Ascending aorta (tissue), 2 donors: ENCODE measurements at regions of chr7 and their contacts with region 1.

Region 1: DNA sequence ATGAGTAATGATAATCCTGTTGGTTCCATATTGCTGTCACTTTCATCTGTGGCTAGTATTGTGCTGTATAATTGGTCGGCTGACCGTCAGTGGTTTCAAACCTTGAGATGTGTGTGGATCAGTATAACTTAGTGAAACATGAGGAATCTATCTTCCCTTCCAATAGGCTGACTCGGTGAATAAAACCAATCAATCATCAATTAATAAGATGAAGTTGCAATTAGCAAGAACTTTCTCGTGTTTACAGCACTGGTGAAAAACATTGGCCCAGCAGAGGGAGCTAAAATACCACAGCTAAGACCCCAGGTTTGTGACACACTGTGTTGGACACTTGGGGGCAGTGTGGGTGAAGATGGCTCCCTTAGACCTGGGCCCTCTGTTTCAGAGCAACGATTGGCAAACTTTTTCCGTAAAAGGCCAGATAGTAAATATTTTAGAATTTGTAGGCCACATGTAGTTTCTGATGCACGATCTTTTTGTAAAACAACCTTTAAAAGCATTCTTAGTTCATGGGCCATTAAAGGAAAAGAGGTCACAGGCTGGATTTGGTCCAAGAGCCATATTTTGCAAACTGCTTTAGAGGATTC is 47.8 kb downstream of the STRA8 start:
- DNase-seq: peak in 1 of 2 donors; percentile 87
- H3K4me3 ChIP-seq: no peak overlapping the region
- H3K27ac ChIP-seq: no peak overlapping the region
- H3K4me1 ChIP-seq: no peaks in the 10 kb centered on the region
- H3K27me3 ChIP-seq: no peaks in the 10 kb centered on the region
- CTCF ChIP-seq: peak; percentile 88 to 95 (median 91)

Region 2: GRCh38 chr7:135558337-135558767 is 276.9 kb after region 1 on chr7:
- intact Hi-C with region 1: loop called (anchors 2 kb)
- DNase-seq: peak in 1 of 2 donors; percentile 76
- H3K4me3 ChIP-seq: peak overlapping the region; percentile 65 to 91
- H3K27ac ChIP-seq: peak overlapping the region; percentile 90 to 91
- H3K4me1 ChIP-seq: peaks cover 0 to 7% of the 10 kb centered on the region in 2 donors
- H3K27me3 ChIP-seq: no peaks in the 10 kb centered on the region
- CTCF ChIP-seq: peak; percentile 36 to 57 (median 45)

Region 3: DNA sequence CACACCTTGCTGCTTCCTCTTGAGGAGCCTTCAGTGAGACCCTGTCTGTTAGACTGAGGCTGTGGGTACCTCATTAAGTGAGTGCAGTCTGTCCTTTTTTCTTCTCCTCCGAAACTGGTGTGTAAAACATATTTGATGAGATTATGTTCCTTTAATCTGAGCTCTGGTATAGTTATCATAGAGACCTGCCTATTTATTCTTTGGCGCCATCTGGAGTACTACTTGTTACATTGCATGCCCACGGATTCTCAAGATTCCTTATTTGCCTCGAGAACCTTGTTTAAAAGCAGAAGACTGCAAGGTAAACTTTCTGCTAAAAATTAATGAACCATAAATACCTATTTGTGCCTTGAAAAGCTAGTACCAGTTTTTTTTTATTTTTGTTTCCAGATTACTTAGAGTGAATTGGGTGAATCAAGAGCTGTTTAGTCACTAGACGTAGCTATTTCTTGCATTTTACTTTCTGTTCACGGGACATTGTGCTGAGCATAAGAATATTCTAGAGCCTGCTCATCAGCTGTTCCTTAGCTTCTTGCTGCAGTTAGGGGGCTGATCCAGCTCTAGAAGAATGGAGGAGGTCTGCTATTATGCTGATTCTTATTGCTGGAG is 363.9 kb after region 1 on chr7:
- intact Hi-C with region 1: loop called (anchors 2 kb)
- DNase-seq: no peak
- H3K4me3 ChIP-seq: peak overlapping the region in 1 of 2 donors; percentile 20
- H3K27ac ChIP-seq: no peak overlapping the region
- H3K4me1 ChIP-seq: no peaks in the 10 kb centered on the region
- H3K27me3 ChIP-seq: no peaks in the 10 kb centered on the region
- CTCF ChIP-seq: peak; percentile 23 to 81 (median 79)

Region 4: DNA sequence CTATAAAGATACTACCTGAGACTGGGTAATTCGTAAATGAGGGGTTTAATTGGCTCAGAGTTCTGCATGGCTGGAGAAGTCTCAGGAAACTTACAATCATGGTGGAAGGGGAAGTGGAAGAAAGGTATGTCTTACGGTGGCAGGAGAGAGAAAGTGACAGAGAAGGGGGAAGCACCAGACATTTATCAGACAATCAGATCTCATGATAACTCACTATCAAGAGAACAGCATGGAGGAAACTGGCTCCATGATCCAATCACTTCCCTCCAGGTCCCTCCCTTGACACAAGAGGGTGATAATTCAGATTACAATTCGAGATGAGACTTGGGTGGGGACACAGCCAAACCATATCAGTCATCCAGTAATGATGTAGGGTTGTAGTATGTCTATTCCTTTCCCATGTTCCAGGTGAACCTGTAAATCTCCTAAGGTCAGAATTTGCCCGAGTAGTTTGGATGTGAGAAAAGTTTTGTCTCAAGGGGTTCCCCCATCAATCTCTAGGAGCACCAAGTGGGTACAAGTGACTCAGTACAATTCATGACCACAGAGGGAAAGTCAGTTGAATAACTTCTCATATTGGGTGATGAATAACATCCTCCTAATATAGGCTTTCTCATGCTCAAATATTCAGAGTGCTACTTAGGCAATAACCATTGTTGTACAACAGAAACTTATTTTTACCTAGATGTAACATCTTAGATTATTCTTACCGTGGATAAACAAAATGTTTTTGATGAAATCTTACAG is 735.4 kb after region 1 on chr7:
- intact Hi-C with region 1: no loop called
- DNase-seq: no peak
- H3K4me3 ChIP-seq: no peak overlapping the region
- H3K27ac ChIP-seq: no peak overlapping the region
- H3K4me1 ChIP-seq: no peaks in the 10 kb centered on the region
- H3K27me3 ChIP-seq: no peaks in the 10 kb centered on the region
- CTCF ChIP-seq: no peak